IMR-90 (cell line): ENCODE measurements at regions of chr18 and their contacts with region 1.

Region 1: DNA sequence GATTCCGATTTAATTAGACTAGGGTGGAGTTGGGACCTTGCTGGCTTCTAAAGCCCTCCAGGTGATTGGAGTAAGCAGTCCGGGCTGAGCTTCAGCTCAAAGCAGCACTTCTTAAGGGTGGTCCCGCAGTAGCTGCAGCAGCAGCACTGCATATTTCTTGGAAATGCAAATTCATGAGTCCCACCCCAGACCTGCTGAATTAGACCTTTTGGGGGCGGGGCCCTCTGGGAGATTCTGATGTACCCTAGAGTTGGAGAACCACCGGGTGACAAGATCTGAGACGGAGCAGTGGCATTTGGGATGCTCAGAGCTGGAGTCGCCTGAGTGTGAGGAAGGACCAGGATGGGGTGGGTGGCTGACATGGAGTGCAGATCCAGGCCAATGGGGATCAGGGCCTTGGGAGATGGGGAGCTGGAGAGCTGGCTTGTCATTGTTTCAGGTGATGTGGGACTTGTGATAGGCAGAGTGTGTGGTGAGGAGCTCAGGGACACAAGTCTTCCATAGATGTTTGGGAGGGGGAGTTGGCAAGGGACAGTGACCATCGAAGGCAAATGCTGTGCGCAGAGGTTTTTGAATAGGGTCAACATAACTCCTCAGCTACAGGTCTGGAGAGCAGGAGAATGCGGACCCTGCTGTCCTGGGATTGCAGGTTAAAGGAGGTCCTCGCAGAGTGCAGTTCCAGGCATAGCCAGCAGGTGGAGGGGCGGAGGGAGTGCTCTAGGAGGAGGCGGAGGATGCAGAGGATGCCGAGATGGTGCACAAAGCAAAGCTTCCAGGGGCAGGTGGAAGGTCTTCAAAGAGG is 130.9 kb upstream of the RAB12 start:
- DNase-seq: peak; percentile 34
- ATAC-seq: peak; percentile 95
- H3K4me3 ChIP-seq: no peak overlapping the region
- H3K27ac ChIP-seq: no peak overlapping the region
- H3K4me1 ChIP-seq: no peaks in the 10 kb centered on the region
- H3K27me3 ChIP-seq: peaks cover 25% of the 10 kb centered on the region
- CTCF ChIP-seq: peak; percentile 67
- POLR2A ChIP-seq: no peak
- RAD21 ChIP-seq: peak; percentile 58

Region 2: GRCh38 chr18:7221424-7222155 is 1256.8 kb before region 1 on chr18:
- CTCF ChIA-PET with region 1: interaction called, 4 read pairs
- POLR2A ChIA-PET with region 1: no interaction called
- dilution Hi-C with region 1: no loop called
- in situ Hi-C with region 1: loop called (anchors 10 kb)
- intact Hi-C with region 1: no loop called
- DNase-seq: peak; percentile 69
- ATAC-seq: peak; percentile 97
- H3K4me3 ChIP-seq: no peak overlapping the region
- H3K27ac ChIP-seq: no peak overlapping the region
- H3K4me1 ChIP-seq: no peaks in the 10 kb centered on the region
- H3K27me3 ChIP-seq: peaks cover 3% of the 10 kb centered on the region
- CTCF ChIP-seq: peak; percentile 79
- POLR2A ChIP-seq: no peak
- RAD21 ChIP-seq: peak; percentile 90

Region 3: GRCh38 chr18:7566567-7567473 is 911.5 kb before region 1 on chr18 and contains the start of gene PTPRM:
- CTCF ChIA-PET with region 1: interaction called, 3 read pairs
- POLR2A ChIA-PET with region 1: no interaction called
- dilution Hi-C with region 1: no loop called
- in situ Hi-C with region 1: no loop called
- intact Hi-C with region 1: loop called (anchors 1 kb)
- DNase-seq: peak; percentile 78
- ATAC-seq: peak; percentile 89
- H3K4me3 ChIP-seq: peak within 1 kb of the TSS; percentile 96
- H3K27ac ChIP-seq: peak within 1 kb of the TSS; percentile 88
- H3K4me1 ChIP-seq: peaks cover 6% of the 10 kb centered on the region
- H3K27me3 ChIP-seq: no peaks in the 10 kb centered on the region
- CTCF ChIP-seq: peak; percentile 73
- POLR2A ChIP-seq: peak; percentile 70
- RAD21 ChIP-seq: peak; percentile 56
- total RNA-seq, gene PTPRM: 23.6 and 28.3 TPM in 2 replicates

Region 4: GRCh38 chr18:7921938-7922587 is 556.3 kb before region 1 on chr18:
- CTCF ChIA-PET with region 1: no interaction called
- POLR2A ChIA-PET with region 1: no interaction called
- dilution Hi-C with region 1: no loop called
- in situ Hi-C with region 1: no loop called
- intact Hi-C with region 1: loop called (anchors 1 kb)
- DNase-seq: peak; percentile 59
- ATAC-seq: peak; percentile 62
- H3K4me3 ChIP-seq: no peak overlapping the region
- H3K27ac ChIP-seq: peak overlapping the region; percentile 19; the same call in 1 of the 2 replicates
- H3K4me1 ChIP-seq: peaks cover 10% of the 10 kb centered on the region
- H3K27me3 ChIP-seq: no peaks in the 10 kb centered on the region
- CTCF ChIP-seq: peak; percentile 39
- POLR2A ChIP-seq: no peak
- RAD21 ChIP-seq: peak; percentile 49

Region 5: GRCh38 chr18:8988261-8988871 is 510.0 kb after region 1 on chr18:
- CTCF ChIA-PET with region 1: interaction called, 3 read pairs
- POLR2A ChIA-PET with region 1: no interaction called
- dilution Hi-C with region 1: no loop called
- in situ Hi-C with region 1: no loop called
- intact Hi-C with region 1: loop called (anchors 2 kb)
- DNase-seq: peak; percentile 69
- ATAC-seq: peak; percentile 86
- H3K4me3 ChIP-seq: no peak overlapping the region
- H3K27ac ChIP-seq: no peak overlapping the region
- H3K4me1 ChIP-seq: peaks cover 14% of the 10 kb centered on the region
- H3K27me3 ChIP-seq: no peaks in the 10 kb centered on the region
- CTCF ChIP-seq: peak; percentile 89
- POLR2A ChIP-seq: peak; percentile 42; the same call in 1 of the 2 replicates
- RAD21 ChIP-seq: peak; percentile 98